Left cardiac atrium (tissue), 4 donors: ENCODE measurements at regions of chr16 and their contacts with region 1.

Region 1: DNA sequence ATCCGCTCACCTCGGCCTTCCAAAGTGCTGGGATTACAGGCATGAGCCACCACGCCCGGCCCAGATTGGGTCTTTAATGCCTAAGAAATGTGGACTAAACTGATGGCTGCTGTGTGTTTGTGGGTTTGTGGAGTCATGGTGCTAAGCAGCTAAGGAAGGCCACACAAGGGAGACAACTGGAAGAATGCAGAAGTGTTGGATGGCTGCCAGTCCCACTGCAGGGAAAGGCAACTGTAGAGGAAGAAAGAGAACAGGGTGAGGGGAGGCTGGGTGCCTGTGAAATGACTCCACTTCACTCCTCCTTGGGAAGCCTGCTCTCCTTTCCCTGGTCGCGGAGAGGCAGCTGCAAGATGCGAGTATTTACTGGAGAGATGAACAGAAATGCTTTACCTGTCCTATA is 23.5 kb upstream of the SIAH1 start:
- DNase-seq: peak; percentile 45
- ATAC-seq: peak in 1 of 2 donors; percentile 48

Region 2: GRCh38 chr16:48499923-48500381 is 91.3 kb after region 1 on chr16:
- intact Hi-C with region 1: no loop called
- DNase-seq: peak; percentile 55
- ATAC-seq: peak; percentile 64 to 78

Region 3: DNA sequence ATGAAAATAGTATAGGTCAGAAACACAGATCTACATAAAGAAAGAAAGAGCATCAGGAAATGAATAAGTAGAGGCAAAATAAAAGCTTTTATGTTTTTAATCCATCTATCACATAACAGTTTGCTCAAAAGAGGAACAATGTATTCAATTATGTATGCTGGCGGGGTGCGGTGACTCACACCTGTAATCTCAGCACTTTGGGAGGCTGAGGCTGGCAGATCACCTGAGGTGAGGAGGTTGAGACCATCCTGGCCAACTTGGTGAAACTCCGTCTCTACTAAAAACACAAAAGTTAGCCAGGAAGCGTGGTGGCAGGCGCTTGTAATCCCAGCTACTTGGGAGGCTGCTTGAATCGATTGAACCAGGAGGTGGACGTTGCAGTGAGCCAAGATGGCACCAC is 106.1 kb after region 1 on chr16:
- intact Hi-C with region 1: loop called in 1 of 2 experiments (anchors 5 kb)
- DNase-seq: no peak
- ATAC-seq: no peak